Dendritic cell treated with granulocyte-macrophage colony-stimulating factor and Interleukin-4, amounts not matched to agents 40 ng/mL and 50 ng/mL, for 4 days (primary cell): ENCODE measurements at regions of chr7 and their contacts with region 1.

Region 1: DNA sequence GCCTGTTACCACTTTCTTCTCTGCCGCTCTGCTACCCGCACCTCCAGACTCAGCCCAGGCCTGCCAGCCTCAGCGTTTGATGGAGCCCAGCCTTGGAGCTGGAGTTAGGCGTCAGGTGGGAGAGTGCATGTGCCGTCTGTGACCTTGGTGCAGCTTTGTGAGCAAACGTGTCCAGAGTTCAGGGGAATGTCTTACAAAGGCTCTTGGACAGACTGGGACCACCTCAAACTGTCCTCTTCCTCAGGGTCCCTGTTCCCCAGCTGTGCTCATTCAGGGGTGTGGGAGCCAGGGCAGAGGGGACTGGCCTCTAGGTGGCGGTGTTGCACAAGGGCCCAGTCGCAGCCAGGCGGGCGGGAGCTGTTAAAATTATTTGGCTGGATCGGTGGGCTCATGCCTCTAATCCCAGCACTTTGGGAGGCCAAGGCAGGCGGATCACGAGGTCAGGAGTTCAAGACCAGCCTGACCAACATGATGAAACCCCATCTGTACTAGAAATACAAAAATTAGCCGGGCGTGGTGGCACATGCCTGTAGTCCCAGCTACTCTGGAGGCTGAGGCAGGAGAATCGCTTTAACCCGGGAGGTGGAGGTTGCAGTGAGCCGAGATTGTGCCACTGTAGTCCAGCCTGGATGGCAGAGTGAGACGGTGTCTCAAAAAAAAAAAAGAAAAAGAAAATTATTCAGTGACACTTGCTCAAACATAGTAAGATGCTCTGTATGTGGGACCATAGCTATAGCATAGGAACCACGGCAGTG is 89.2 kb downstream of the ADCY1 start:
- H3K4me3 Mint-ChIP-seq: no peak overlapping the region
- H3K27ac Mint-ChIP-seq: no peak overlapping the region
- H3K4me1 Mint-ChIP-seq: no peaks in the 10 kb centered on the region
- H3K27me3 Mint-ChIP-seq: no peaks in the 10 kb centered on the region

Region 2: DNA sequence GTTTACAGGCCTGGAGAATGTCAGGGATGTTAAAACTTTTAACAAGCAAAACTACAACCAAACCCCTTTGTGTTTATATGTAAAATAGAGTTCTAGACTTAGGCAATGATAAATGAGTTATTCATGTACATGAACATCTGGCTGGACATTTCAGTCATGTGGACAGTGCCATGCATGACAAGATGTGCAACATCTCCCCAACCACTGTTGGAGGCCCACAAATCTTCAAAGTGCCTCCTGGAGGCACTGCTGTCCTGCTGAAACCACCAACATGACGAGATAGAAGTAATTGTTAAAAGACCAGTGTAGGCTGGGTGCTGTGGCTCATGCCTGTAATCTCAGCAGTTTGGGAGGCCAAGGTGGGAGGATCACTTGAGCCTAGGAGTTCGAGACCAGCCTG is 848.4 kb before region 1 on chr7:
- intact Hi-C with region 1: no loop called
- H3K4me3 Mint-ChIP-seq: no peak overlapping the region
- H3K27ac Mint-ChIP-seq: no peak overlapping the region
- H3K4me1 Mint-ChIP-seq: no peaks in the 10 kb centered on the region
- H3K27me3 Mint-ChIP-seq: no peaks in the 10 kb centered on the region

Region 3: GRCh38 chr7:45402480-45403218 is 260.7 kb before region 1 on chr7:
- intact Hi-C with region 1: no loop called
- H3K4me3 Mint-ChIP-seq: no peak overlapping the region
- H3K27ac Mint-ChIP-seq: no peak overlapping the region
- H3K4me1 Mint-ChIP-seq: peaks cover 23% of the 10 kb centered on the region
- H3K27me3 Mint-ChIP-seq: peaks cover 5% of the 10 kb centered on the region

Region 4: DNA sequence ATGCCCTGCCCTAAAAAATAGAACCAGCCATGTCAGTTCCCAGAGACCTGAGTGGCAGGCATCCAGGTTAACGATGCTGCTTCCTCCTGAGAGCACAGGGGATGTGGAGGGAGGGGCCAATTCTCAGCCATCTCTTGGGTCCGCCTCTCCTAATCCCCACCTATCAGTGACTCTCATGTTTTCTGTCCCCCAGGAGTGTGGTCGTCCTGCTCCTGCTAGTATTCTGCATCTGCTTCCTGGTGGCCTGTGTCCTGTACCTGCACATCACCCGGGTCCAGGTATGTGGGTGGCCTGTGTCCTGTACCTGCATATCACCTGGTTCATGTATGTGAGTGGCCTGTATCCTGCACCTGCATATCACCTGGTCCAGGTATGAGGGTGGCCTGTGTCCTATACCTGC is 16.2 kb after region 1 on chr7:
- intact Hi-C with region 1: no loop called
- H3K4me3 Mint-ChIP-seq: no peak overlapping the region
- H3K27ac Mint-ChIP-seq: no peak overlapping the region
- H3K4me1 Mint-ChIP-seq: no peaks in the 10 kb centered on the region
- H3K27me3 Mint-ChIP-seq: peaks cover 4% of the 10 kb centered on the region

Region 5: DNA sequence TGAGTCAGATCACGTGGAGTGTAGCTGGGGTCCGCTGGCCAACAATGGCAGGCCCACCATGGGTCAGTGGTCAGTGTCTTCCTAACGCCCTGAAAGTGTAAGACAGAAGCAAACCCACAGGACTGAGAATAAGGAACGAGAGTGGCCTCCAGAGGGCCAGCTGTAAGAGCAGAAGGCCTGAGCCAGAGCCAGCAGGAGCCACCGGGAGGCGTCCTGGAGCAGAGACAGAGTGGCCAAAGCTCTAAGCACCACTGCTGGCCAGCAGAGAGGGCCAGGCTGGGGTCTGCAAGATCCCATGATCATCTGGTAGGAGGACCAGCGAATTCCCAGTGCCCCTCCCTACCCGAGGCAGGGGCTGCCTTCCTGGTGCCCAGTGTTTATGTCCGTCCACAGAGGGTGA is 200.4 kb after region 1 on chr7:
- intact Hi-C with region 1: loop called (anchors 5 kb)
- H3K4me3 Mint-ChIP-seq: no peak overlapping the region
- H3K27ac Mint-ChIP-seq: no peak overlapping the region
- H3K4me1 Mint-ChIP-seq: no peaks in the 10 kb centered on the region
- H3K27me3 Mint-ChIP-seq: no peaks in the 10 kb centered on the region